A673 (cell line): ENCODE measurements at regions of chr13 and their contacts with region 1.

Region 1: GRCh38 chr13:37074703-37075102 is 15.2 kb upstream of the SUPT20H start:
- DNase-seq: peak; percentile 71
- H3K4me3 ChIP-seq: no peak overlapping the region
- H3K27ac ChIP-seq: no peak overlapping the region
- H3K4me1 ChIP-seq: no peaks in the 10 kb centered on the region
- H3K27me3 ChIP-seq: no peaks in the 10 kb centered on the region
- CTCF ChIP-seq: peak; percentile 65

Region 2: GRCh38 chr13:37602747-37603381 is 528.2 kb after region 1 on chr13:
- CTCF ChIA-PET with region 1: no interaction called
- POLR2A ChIA-PET with region 1: no interaction called
- intact Hi-C with region 1: loop called (anchors 2 kb)
- DNase-seq: peak; percentile 53
- H3K4me3 ChIP-seq: no peak overlapping the region
- H3K27ac ChIP-seq: no peak overlapping the region
- H3K4me1 ChIP-seq: no peaks in the 10 kb centered on the region
- H3K27me3 ChIP-seq: no peaks in the 10 kb centered on the region
- CTCF ChIP-seq: peak; percentile 77

Region 3: GRCh38 chr13:38530492-38530891 is 1455.8 kb after region 1 on chr13:
- CTCF ChIA-PET with region 1: no interaction called
- POLR2A ChIA-PET with region 1: no interaction called
- intact Hi-C with region 1: loop called (anchors 10 kb)
- DNase-seq: peak; percentile 57
- H3K4me3 ChIP-seq: no peak overlapping the region
- H3K27ac ChIP-seq: no peak overlapping the region
- H3K4me1 ChIP-seq: peaks cover 14% of the 10 kb centered on the region
- H3K27me3 ChIP-seq: no peaks in the 10 kb centered on the region
- CTCF ChIP-seq: peak; percentile 68

Region 4: GRCh38 chr13:38680912-38681311 is 1606.2 kb after region 1 on chr13:
- CTCF ChIA-PET with region 1: no interaction called
- POLR2A ChIA-PET with region 1: no interaction called
- intact Hi-C with region 1: no loop called
- DNase-seq: no peak
- H3K4me3 ChIP-seq: no peak overlapping the region
- H3K27ac ChIP-seq: no peak overlapping the region
- H3K4me1 ChIP-seq: peaks cover 14% of the 10 kb centered on the region
- H3K27me3 ChIP-seq: no peaks in the 10 kb centered on the region
- CTCF ChIP-seq: no peak